H1 (cell line): ENCODE measurements at regions of chr1 and their contacts with region 1.

Region 1: DNA sequence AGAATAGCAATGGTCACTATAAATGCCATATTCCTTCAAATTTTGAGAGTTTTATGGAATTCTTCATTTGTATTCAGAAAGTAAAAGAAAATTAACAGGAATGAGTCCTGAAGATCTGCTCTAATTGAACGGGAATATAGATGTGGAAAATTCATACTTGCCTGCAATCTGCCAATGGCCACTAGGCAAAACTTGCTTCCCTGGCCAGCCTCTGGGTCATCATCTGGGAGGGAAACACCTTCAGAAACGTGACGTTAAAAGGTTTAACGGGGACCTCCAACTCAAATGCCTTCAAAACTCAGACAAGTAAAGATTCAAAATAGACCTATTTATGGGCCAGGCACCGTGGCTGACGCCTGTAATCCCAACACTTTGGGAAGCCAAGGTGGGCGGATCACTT is 21.7 kb upstream of the CTSK start:
- DNase-seq: no peak
- H3K4me3 ChIP-seq: no peak overlapping the region
- H3K27ac ChIP-seq: no peak overlapping the region
- H3K4me1 ChIP-seq: no peaks in the 10 kb centered on the region
- H3K27me3 ChIP-seq: no peaks in the 10 kb centered on the region
- CTCF ChIP-seq: peak; percentile 34 to 57 (median 42)
- EP300 ChIP-seq: no peak
- POLR2A ChIP-seq: no peak
- RAD21 ChIP-seq: peak; percentile 52 to 56

Region 2: DNA sequence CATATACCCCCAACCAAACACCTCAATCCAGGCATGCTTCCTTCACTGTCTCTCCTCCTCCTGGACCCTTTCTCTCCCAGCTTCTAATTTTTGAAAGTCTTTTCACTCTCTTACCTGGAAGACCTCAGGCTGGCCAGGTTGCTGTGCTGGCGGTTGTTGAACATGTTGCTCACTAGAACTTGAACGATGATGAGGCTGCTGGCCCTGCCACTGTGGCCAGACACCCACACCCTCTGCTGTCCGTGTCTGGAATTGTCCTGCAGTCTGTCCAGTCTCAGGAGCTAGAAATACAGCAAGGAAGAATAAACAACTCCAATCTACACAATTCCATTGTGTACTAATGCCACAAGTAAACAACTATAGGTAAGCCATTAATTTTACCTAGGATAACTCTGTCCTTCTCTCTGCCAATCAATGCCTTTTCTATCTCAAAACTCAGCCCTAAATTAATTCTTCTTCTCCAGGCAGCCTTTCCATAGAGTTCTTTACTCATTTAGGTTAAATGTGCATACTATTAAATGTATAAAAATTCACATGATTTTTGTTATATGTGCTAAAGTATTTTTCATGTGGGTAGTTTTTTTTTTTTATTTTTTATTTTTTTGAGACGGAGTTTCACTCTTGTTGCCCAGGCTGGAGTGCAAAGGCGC is 16.6 kb before region 1 on chr1:
- CTCF ChIA-PET with region 1: interaction called, 13 read pairs
- POLR2A ChIA-PET with region 1: interaction called, 3 read pairs
- DNase-seq: peak in 1 of 2 experiments; percentile 29
- H3K4me3 ChIP-seq: no peak overlapping the region
- H3K27ac ChIP-seq: no peak overlapping the region
- H3K4me1 ChIP-seq: peaks cover 0 to 2% (median under 1%) of the 10 kb centered on the region in 4 experiments; a peak in 3 of 7 replicates
- H3K27me3 ChIP-seq: no peaks in the 10 kb centered on the region
- CTCF ChIP-seq: peak; percentile 71 to 79 (median 78)
- EP300 ChIP-seq: no peak
- POLR2A ChIP-seq: no peak
- RAD21 ChIP-seq: peak; percentile 84 to 87

Region 3: DNA sequence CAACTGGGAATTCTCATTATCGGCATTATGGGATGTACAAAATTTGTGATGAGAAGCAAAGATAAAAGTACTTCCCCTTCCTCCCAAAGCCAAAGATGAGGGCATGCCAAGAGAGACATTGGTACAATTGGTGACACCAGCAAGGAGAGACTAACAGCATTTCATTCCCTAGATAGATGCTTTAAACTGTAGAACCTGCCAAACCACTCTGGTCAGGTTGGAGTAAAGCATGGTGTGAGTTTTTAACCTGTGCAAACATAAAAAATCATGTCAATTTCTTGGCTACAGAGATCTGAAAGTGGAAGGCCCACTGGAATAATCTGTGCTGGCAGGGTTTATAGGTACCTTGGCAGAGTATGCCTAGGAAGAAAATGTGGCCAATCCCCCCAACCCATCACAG is 76.6 kb after region 1 on chr1:
- CTCF ChIA-PET with region 1: no interaction called
- POLR2A ChIA-PET with region 1: no interaction called
- DNase-seq: no peak
- H3K4me3 ChIP-seq: no peak overlapping the region
- H3K27ac ChIP-seq: no peak overlapping the region
- H3K4me1 ChIP-seq: no peaks in the 10 kb centered on the region
- H3K27me3 ChIP-seq: no peaks in the 10 kb centered on the region
- CTCF ChIP-seq: no peak
- EP300 ChIP-seq: no peak
- POLR2A ChIP-seq: no peak
- RAD21 ChIP-seq: no peak

Region 4: GRCh38 chr1:150922519-150922975 is 92.8 kb after region 1 on chr1:
- CTCF ChIA-PET with region 1: interaction called, 12 read pairs
- POLR2A ChIA-PET with region 1: no interaction called
- DNase-seq: peak; percentile 15 to 70
- H3K4me3 ChIP-seq: no peak overlapping the region
- H3K27ac ChIP-seq: no peak overlapping the region
- H3K4me1 ChIP-seq: peaks cover 0 to 4% (median 0%) of the 10 kb centered on the region in 4 experiments; a peak in 2 of 7 replicates
- H3K27me3 ChIP-seq: no peaks in the 10 kb centered on the region
- CTCF ChIP-seq: peak; percentile 25 to 80 (median 56)
- EP300 ChIP-seq: no peak
- POLR2A ChIP-seq: no peak
- RAD21 ChIP-seq: peak; percentile 66 to 72

Region 5: GRCh38 chr1:151070474-151071276 is 240.9 kb after region 1 on chr1 and contains the start of gene GABPB2:
- CTCF ChIA-PET with region 1: no interaction called
- POLR2A ChIA-PET with region 1: no interaction called
- DNase-seq: peak; percentile 77 to 98
- H3K4me3 ChIP-seq: peak within 1 kb of the TSS; percentile 83 to 94 (median 92)
- H3K27ac ChIP-seq: peak within 1 kb of the TSS; percentile 98
- H3K4me1 ChIP-seq: peaks cover 0 to 4% (median under 1%) of the 10 kb centered on the region in 4 experiments; a peak in 1 of 7 replicates
- H3K27me3 ChIP-seq: no peaks in the 10 kb centered on the region
- CTCF ChIP-seq: peak; percentile 80 to 90 (median 83)
- EP300 ChIP-seq: 0 out of 3 replicates have a peak, but pooled peaks of 1 of the 2 experiments have one; percentile 19
- POLR2A ChIP-seq: peak; percentile 74 to 78; a peak in 1 of 3 replicates
- RAD21 ChIP-seq: peak; percentile 61 to 63
- total RNA-seq, gene GABPB2: 1.9 and 2.4 TPM in 2 replicates